ENCODE measurements at regions of chr2 and their contacts with region 1.

Region 1: DNA sequence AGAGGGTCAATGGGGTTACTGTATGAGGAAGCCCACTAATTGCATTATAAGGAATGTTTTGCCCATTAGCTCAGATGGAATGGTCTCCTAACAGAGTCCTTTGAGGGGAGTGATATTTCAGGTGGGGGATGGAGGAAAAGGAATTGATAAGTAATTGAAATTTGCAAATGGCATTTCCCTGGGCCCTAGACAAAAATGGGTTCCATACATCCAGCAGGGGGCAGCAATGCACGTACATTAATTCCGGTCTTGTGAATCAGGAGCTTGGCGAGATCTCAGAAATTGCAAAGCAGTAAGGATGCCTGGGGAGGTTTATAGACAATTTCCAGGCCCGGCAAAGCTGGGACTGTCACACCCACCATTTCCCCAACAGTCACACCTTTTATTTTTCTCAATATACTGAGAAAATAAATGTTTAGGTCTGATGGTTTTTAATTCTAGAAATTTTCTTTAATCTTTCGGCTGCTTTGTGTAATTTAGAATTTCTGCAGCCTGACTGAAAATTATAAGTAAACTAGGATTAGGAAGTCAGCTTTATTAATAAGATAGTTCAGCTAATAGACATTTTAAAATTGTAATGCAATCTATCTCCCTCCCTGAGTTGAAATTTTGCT is 122.8 kb downstream of the LYPD1 start:
- DNase-seq: no peak
- H3K4me3 ChIP-seq: no peak overlapping the region
- H3K27ac ChIP-seq: no peak overlapping the region
- H3K4me1 ChIP-seq: no peaks in the 10 kb centered on the region
- H3K27me3 ChIP-seq: no peaks in the 10 kb centered on the region
- CTCF ChIP-seq: peak in 9 of 11 experiments; percentile 22 to 75 (median 60)
- POLR2A ChIP-seq: no peak

Region 2: GRCh38 chr2:132991471-132992045 is 444.4 kb after region 1 on chr2:
- intact Hi-C with region 1: no loop called
- DNase-seq: no peak
- H3K4me3 ChIP-seq: no peak overlapping the region
- H3K27ac ChIP-seq: no peak overlapping the region
- H3K4me1 ChIP-seq: no peaks in the 10 kb centered on the region
- H3K27me3 ChIP-seq: no peaks in the 10 kb centered on the region
- CTCF ChIP-seq: no peak
- POLR2A ChIP-seq: no peak

Region 3: GRCh38 chr2:133844214-133844892 is 1297.2 kb after region 1 on chr2:
- intact Hi-C with region 1: loop called (anchors 10 kb)
- DNase-seq: no peak
- H3K4me3 ChIP-seq: no peak overlapping the region
- H3K27ac ChIP-seq: no peak overlapping the region
- H3K4me1 ChIP-seq: no peaks in the 10 kb centered on the region
- H3K27me3 ChIP-seq: peaks cover 0 to 16% (median 0%) of the 10 kb centered on the region in 7 donors
- CTCF ChIP-seq: peak; percentile 55 to 85 (median 78)
- POLR2A ChIP-seq: no peak

Measured in spleen (tissue), 13 donors.